Activated CD8-positive, alpha-beta T cell treated with anti-CD3 and anti-CD28 coated beads, Interleukin-2, amount 10 ng/mL, durations not matched to agents 7 days and 5 days (primary cell): ENCODE measurements at regions of chr4 and their contacts with region 1.

Region 1: DNA sequence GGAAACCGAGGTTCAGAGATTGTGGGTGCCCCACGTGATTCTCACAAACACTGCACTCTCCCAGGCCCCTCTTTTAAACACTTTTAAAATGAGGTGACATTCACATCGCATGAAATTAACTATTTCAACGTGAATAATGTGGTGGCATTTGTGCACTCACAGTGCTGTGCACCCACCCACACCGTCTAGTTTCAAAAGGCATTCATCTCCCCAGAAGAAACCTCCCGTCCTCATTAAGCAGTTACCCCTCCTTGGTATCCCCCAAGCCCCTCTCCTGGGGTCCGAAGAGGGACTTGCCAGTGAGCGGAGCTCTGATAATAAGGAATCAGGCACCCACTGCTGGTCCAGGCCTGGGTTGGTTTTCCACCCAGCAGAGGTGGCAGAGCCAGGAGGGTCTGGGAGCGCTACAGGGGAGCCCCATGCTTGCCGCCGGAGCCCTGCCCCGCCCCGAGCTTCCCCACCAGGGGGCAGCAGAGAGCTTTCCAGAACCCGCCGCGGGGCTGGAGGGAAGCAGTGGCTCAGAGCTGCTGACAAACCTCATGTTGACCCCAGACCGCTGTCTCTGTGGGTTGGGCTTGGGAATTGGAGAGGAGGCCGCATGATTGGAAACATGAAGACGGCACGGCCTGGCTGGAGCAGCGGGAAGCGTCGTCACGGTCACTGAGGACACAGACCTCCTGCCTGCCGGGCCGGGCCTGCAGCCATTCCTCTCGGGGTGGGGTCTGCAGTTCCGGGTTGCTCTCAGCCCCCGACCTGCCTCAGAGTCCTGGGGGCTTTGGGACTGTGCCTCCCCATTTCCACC is 27.5 kb upstream of the HTRA3 start:
- DNase-seq: peak; percentile 81
- ATAC-seq: peak; percentile 88
- H3K4me3 Mint-ChIP-seq: no peak overlapping the region
- H3K27ac Mint-ChIP-seq: no peak overlapping the region
- H3K4me1 Mint-ChIP-seq: peaks cover 5% of the 10 kb centered on the region
- H3K27me3 Mint-ChIP-seq: no peaks in the 10 kb centered on the region

Region 2: DNA sequence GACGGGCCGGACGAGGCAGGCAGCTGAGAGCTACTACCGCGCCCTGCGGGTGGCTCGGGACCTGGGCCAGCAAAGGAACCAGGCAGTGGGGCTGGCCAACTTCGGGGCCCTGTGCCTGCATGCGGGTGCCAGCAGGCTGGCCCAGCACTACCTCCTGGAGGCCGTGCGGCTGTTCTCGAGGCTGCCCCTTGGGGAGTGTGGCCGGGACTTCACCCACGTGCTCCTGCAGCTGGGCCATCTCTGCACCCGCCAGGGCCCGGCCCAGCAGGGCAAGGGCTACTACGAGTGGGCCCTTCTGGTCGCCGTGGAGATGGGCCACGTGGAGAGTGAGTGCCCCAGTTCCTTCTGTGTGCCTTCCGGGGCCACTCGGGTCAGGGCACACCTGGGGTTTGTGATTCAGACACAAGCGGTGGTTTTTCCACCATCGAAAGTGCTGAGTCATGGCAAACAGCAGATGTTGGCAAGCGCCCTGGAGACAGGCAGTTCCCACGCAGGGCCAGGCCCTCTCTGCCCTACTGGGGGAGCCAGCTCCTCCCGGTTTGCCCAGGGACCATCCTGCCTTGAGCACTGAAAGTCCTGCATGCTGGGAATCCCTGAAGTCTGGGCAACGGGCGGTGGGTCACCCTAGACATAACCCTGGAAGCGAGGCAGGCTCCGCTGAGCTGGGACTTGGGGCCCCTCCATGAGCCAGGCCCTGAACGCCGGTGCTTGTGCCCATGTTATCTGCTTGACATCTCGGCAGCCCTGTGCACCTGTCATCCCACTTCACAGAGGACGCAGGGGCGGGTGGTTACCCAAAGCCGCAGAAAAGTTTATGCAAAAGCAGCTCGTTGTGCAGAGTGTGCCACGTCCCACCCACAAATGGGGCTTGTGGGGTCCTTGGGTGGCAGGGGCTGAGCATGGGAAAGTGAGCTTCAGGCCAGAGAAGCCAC is 13.5 kb before region 1 on chr4:
- CTCF ChIA-PET with region 1: interaction called, 10 read pairs
- POLR2A ChIA-PET with region 1: no interaction called
- DNase-seq: peak; percentile 67
- ATAC-seq: peak; percentile 76
- H3K4me3 Mint-ChIP-seq: no peak overlapping the region
- H3K27ac Mint-ChIP-seq: no peak overlapping the region
- H3K4me1 Mint-ChIP-seq: peaks cover 37% of the 10 kb centered on the region
- H3K27me3 Mint-ChIP-seq: peaks cover 3% of the 10 kb centered on the region

Region 3: GRCh38 chr4:8403173-8403753 is 161.2 kb after region 1 on chr4:
- CTCF ChIA-PET with region 1: interaction called, 20 read pairs
- POLR2A ChIA-PET with region 1: no interaction called
- DNase-seq: peak; percentile 53
- ATAC-seq: peak; percentile 70
- H3K4me3 Mint-ChIP-seq: no peak overlapping the region
- H3K27ac Mint-ChIP-seq: no peak overlapping the region
- H3K4me1 Mint-ChIP-seq: no peaks in the 10 kb centered on the region
- H3K27me3 Mint-ChIP-seq: no peaks in the 10 kb centered on the region